ENCODE measurements at regions of chrX and their contacts with region 1.

Region 1: GRCh38 chrX:119488749-119489148 is 20.5 kb downstream of the SLC25A5 start:
- DNase-seq: peak; percentile 50
- H3K4me3 Mint-ChIP-seq: no peak overlapping the region
- H3K27ac Mint-ChIP-seq: no peak overlapping the region
- H3K4me1 Mint-ChIP-seq: no peaks in the 10 kb centered on the region
- H3K27me3 Mint-ChIP-seq: no peaks in the 10 kb centered on the region

Region 2: GRCh38 chrX:119468930-119469635 is 19.7 kb before region 1 on chrX:
- CTCF ChIA-PET with region 1: interaction called, 14 read pairs
- DNase-seq: peak; percentile 92
- H3K4me3 Mint-ChIP-seq: peak overlapping the region; percentile 85
- H3K27ac Mint-ChIP-seq: peak overlapping the region; percentile 94
- H3K4me1 Mint-ChIP-seq: peaks cover 26% of the 10 kb centered on the region
- H3K27me3 Mint-ChIP-seq: peaks cover 3% of the 10 kb centered on the region

Region 3: DNA sequence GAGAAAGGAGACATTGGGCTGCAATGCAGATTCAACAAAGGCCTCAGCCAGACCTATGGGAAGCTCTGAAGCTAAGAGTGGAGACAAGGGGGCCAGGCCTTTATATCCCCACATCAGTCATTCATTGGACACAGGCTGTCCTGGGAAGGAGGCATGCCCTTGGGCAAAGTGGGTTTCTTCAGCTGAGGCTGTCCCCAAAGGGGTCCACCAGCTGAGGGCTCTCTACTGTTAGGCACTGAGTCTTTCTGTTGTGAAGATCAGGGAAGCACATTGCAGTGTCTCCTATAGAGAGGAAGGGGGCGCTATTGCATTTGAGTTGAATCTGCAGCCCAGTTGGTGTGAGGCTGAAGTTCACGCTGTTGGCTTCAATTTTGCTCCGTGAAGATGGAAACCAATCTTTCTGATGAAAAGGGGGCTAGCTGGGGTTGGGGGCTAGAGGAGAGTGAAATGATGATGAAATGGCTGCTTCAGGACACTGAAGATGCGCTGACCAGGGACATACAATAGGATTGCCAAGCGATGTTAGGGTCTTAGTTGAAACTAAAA is 27.5 kb after region 1 on chrX:
- CTCF ChIA-PET with region 1: interaction called, 25 read pairs
- DNase-seq: peak; percentile 45
- H3K4me3 Mint-ChIP-seq: no peak overlapping the region
- H3K27ac Mint-ChIP-seq: no peak overlapping the region
- H3K4me1 Mint-ChIP-seq: peaks cover 4% of the 10 kb centered on the region
- H3K27me3 Mint-ChIP-seq: no peaks in the 10 kb centered on the region

Region 4: DNA sequence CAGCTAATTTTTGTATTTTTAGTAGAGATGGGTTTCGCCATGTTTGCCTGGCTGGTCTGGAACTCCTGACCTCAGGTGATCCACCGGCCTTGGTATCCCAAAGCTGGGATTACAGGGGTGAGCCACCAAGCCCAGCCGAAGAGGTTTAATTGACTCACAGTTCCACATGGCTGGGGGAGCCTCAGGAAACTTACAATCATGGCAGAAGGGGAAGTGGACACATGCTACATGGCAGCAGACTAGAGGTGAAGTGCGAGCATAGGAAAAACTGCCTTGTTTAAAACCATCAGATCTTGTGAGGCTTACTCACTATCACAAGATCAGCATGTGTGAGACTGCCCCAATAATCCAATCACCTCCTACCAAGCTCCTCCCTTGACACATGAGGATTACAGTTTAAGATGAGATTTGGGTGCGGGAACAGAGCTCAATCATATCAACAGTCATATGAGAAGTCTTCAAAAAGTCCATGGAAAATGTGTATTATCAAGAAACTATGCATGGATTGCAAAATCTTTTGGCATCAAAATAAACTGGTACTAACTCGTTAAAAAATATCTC is 328.5 kb after region 1 on chrX:
- CTCF ChIA-PET with region 1: no interaction called
- DNase-seq: no peak
- H3K4me3 Mint-ChIP-seq: no peak overlapping the region
- H3K27ac Mint-ChIP-seq: no peak overlapping the region
- H3K4me1 Mint-ChIP-seq: peaks cover 11% of the 10 kb centered on the region
- H3K27me3 Mint-ChIP-seq: no peaks in the 10 kb centered on the region

Region 5: DNA sequence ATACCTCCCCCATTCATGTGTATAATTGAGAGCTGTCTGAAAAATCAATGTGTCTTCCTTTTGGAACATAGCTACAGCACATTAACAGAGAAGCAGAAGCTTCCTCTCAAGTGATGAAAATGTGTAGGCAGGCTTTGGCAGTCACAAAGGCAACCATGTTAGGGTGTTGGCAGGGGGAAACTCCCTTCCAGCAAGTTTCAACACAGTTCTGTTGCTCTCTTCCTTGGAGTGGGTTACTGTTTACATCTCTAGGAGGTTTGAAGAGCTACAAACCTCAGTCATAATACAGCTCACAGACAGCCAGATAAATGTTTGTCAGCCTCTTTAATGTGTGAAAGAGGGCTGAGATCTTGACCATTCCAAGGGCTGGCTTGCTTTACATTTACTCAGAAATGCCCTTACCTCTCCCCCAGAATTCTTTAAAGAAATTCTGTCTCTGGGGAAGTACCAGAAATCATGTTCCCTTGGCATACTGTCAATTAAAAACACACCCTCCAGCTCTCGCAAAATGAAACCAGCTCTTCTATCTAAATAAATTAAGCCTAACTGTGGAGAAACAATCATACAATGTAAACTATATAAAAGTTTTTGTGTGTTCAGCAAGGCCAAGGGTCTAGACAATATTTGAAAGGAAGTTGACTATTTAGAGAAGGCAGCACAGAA is 780.8 kb after region 1 on chrX:
- CTCF ChIA-PET with region 1: no interaction called
- DNase-seq: no peak
- H3K4me3 Mint-ChIP-seq: no peak overlapping the region
- H3K27ac Mint-ChIP-seq: no peak overlapping the region
- H3K4me1 Mint-ChIP-seq: peaks cover 4% of the 10 kb centered on the region
- H3K27me3 Mint-ChIP-seq: peaks cover 3% of the 10 kb centered on the region

Measured in activated naive CD4-positive, alpha-beta T cell treated with anti-CD3 and anti-CD28 coated beads, Interleukin-2, amount 10 ng/mL, durations not matched to agents 7 days and 5 days (primary cell).